ENCODE measurements at regions of chr4 and their contacts with region 1.

Region 1: DNA sequence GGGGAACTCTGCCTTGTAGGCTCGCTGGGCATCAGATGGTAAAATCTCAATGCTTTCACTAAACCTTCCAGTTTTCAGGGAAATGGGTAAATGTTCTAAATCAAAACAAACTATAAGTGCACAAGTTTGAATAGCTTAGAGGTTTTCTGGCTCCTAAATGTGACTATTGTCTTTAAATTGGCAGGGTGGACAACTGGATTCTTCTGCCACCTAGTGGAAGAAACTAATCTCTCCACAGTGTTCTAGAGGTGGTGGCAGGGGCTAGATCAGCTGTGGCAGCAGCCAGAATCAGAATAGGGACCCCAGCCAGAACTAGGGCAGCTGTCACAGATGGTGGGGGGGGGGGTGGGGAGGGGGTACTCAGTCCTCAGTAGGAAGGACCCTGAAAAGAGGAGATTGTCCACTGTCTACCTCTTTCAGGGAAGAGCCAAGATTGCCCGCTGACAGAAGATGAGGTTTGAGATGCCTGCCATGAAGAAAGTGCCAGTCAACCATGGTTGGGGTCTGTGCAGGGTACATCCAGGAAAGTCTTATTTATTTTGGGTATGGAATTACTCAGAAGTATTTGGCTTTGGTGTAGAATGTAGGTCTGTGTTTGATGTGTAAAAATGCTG is 201.4 kb downstream of the CCNG2 start:
- DNase-seq: no peak
- ATAC-seq: no peak

Region 2: GRCh38 chr4:77156533-77156911 is 201.9 kb before region 1 on chr4:
- intact Hi-C with region 1: no loop called
- DNase-seq: peak; percentile 94
- ATAC-seq: peak; percentile 97

Region 3: GRCh38 chr4:77240469-77241066 is 117.9 kb before region 1 on chr4:
- intact Hi-C with region 1: loop called (anchors 1 kb)
- DNase-seq: peak; percentile 69
- ATAC-seq: peak; percentile 32